Dorsolateral prefrontal cortex (tissue), 120 donors: ENCODE measurements at regions of chr6 and their contacts with region 1.

Region 1: DNA sequence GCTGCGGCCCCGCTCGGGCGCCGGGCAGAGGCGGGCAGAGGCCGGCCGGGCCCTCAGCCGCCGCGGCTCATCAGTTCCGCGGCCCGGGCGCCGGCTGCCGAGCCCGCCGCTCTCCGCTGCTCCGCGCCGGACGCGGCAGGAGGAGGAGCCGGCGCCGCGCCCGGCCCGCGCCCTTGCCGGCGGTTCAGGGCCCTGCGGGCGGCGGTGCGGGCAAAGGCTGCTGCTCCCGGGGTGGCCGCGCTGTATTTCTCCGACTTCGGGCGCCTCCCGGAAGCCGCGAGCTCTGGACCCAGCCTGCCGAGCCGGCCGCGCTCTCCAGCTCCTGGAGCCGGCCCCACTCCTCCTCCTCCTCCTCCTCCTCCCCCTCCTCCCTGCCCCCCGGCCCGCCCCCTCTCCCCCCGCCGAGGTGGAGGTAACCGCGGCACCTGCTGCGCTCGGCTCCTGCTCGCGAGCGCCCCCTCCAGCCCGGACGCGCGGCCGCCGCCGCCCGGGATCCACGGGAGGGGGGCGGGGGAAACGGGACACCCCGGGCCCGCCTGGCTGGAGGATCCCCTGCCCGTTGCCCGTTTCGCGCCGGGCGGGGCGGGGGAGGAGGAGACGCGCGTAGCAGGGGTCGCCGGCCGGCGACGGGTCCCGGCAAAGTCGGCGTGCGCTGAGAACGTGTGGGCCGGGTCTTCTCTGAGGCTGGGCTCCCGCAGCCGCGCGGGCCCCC is at the start of gene SLC22A23:
- DNase-seq: peak in 9 of 10 donors; percentile 40 to 84 (median 67)
- H3K4me3 ChIP-seq: peak within 1 kb of the TSS; percentile 72 to 95 (median 87)
- H3K27ac ChIP-seq: peak within 1 kb of the TSS; percentile 73 to 99 (median 97)
- H3K27me3 ChIP-seq: no peaks in the 10 kb centered on the region
- CTCF ChIP-seq: peak; percentile 48 to 94 (median 71)
- total RNA-seq, gene SLC22A23: 36.4 to 160 (median 55.7) TPM

Region 2: GRCh38 chr6:3281631-3282475 is 175.1 kb before region 1 on chr6:
- intact Hi-C with region 1: loop called (anchors 2 to 5 kb)
- DNase-seq: peak in 6 of 10 donors; percentile 29 to 55 (median 38)
- H3K4me3 ChIP-seq: no peak overlapping the region
- H3K27ac ChIP-seq: peak overlapping the region in 58 of 59 donors; percentile 18 to 85 (median 66)
- H3K27me3 ChIP-seq: no peaks in the 10 kb centered on the region
- CTCF ChIP-seq: no peak

Region 3: GRCh38 chr6:3356056-3356761 is 100.7 kb before region 1 on chr6:
- intact Hi-C with region 1: loop called (anchors 1 to 10 kb)
- DNase-seq: peak in 8 of 10 donors; percentile 29 to 66 (median 62)
- H3K4me3 ChIP-seq: peak overlapping the region in 56 of 59 donors; percentile 3 to 61 (median 42)
- H3K27ac ChIP-seq: peak overlapping the region; percentile 72 to 99 (median 95)
- H3K27me3 ChIP-seq: no peaks in the 10 kb centered on the region
- CTCF ChIP-seq: no peak

Region 4: DNA sequence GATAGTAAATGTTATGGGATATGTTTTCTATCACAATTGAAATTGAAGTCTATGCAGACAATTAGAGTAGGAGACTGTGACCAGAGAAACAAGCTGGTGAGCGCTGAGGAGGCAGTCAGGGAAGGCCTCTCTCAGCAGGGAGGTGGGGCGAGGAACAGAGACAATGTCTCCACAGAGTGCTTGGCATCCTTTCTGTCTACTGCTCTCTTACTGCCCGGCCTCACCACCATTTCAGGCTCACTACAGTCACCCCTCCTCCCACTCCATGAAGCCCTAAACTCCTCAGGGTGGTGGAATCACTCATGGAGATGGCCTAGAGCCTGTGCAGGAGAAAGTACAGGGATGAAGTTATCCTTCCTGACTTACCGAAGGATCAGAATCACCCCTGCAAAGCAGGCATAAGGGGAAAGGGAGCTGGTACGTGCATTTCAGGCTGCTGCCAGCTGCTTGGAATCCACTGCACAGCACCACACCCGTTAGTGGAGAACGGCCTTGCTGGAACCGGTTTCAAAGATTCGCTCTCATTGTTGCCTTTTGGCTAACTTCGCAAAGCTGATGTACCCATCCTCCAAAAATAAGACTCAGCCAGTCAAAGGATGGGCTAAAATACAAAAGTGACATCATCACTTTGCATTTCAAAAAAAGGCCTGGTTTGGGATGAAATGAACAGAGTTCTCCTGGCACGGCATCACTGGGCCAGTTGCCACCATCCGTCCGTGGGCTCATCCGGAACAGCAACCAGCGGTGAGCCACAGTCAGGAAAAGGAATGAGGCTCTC is 67.3 kb before region 1 on chr6:
- intact Hi-C with region 1: loop called (anchors 2 to 5 kb)
- DNase-seq: peak in 3 of 10 donors; percentile 47 to 65 (median 48)
- H3K4me3 ChIP-seq: peak overlapping the region in 10 of 59 donors; percentile 2 to 39 (median 16)
- H3K27ac ChIP-seq: peak overlapping the region; percentile 40 to 99 (median 97)
- H3K27me3 ChIP-seq: no peaks in the 10 kb centered on the region
- CTCF ChIP-seq: peak in 1 of 56 donors; percentile 3

Region 5: DNA sequence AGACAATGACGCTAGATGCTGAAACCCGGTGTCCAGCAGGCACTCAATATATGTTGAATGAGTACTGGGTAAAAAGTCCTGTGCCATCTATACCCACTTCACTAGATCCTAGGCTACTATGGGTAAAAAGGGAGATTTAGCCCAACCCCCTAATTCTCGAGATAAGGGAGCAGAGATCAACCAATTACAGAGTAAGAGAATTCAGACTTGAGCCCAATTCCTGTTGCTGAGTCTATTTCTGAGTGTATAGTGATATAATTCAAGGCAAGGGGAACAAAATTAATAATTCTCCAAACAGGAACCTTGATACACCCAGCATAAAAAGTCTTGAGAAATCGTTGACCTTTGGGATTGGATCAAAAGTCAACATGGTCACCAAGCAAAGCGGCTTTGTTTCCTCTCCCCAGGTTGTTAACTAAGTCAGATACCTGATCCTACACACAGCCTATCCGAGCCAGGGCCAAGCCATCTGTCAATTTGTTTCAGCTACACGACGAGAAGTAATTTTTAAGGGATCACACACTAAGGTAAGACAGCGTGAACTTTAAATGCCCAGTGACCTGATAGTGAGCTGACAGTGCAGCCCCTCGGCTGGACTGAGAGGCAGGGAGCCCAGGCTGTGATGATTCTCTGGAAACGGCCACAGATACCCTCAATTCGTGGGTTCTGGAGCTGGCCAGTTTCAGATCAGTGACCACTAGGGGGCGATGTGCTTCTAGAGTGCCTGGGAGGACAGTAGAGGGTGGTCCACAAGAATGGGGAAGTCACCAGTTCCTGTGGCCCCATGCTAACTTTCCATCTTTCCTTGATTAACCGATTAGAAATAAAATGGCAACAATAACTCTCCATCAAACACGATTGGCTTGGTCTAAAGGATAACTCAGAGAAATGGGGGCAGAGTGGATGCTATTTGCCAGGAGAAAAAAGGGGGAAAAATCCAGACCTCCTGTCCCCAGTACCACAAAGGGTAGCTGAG is 46.2 kb before region 1 on chr6:
- intact Hi-C with region 1: loop called in 1 of 2 experiments (anchors 5 kb)
- DNase-seq: peak in 5 of 10 donors; percentile 44 to 71 (median 64)
- H3K4me3 ChIP-seq: no peak overlapping the region
- H3K27ac ChIP-seq: peak overlapping the region in 27 of 59 donors; percentile 5 to 75 (median 45)
- H3K27me3 ChIP-seq: no peaks in the 10 kb centered on the region
- CTCF ChIP-seq: peak; percentile 35 to 85 (median 76)

Region 6: DNA sequence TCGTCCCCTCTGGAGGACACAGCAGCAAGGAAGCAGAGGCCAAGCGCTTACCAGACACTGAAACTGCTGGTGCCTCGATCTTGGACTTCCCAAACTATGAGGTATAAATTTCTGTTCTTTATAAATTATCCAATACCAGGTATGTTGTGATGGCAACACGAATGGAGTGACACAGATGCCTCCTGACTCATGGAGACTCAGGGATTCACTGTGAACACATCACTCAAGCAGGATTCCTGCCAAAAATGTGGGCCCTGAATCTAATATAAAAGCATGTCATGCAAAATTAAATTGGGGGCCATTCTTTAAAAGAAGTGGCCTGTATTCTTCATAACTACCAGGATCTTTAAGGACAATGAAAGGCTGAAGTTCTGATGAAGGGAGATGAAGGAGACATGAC is 52.4 kb after region 1 on chr6:
- intact Hi-C with region 1: loop called in 1 of 2 experiments (anchors 5 kb)
- DNase-seq: no peak
- H3K4me3 ChIP-seq: no peak overlapping the region
- H3K27ac ChIP-seq: no peak overlapping the region
- H3K27me3 ChIP-seq: no peaks in the 10 kb centered on the region
- CTCF ChIP-seq: no peak

Region 7: DNA sequence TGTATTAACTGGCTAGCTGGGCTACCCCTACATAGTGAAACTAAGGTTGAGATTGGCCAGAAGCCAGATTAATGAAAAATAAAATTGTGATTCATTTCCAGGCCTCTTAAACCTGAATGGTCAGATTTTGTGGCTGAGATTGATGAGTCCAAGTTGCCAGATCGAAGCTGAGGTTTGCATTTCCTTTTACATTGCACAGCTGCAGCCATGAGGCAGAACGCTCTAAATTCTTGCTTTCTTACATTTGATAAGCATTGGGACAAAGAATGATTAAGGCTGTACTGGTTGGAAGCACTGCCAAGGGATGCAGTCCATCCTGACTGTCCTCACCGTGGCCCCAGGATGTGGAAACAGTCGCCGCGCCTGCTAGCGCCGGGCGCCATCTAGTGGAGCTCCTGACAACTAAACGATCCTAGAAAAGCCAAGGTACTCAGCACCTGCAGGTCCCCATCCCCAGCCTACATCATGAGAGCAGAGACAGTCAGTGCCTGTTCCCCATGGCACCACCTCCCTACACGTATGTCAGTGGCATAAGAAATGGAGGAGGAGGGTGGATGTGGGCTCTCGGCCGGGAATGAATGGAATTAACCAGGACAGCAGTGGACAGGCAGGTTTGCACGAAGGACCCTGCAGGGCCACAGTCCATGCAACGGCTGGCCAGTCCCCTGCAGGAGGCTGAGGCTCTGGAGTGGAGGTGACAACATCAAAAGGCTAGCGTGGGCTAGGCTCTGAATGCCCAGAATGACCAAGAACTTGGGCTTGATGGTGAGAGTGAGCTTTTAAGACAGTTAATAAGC is 275.6 kb after region 1 on chr6:
- intact Hi-C with region 1: loop called in 1 of 2 experiments (anchors 2 kb)
- DNase-seq: peak; percentile 69 to 87 (median 85)
- H3K4me3 ChIP-seq: peak overlapping the region in 6 of 59 donors; percentile 7 to 40 (median 10)
- H3K27ac ChIP-seq: peak overlapping the region in 6 of 59 donors; percentile 7 to 25 (median 10)
- H3K27me3 ChIP-seq: no peaks in the 10 kb centered on the region
- CTCF ChIP-seq: peak; percentile 64 to 98 (median 92)

Region 8: DNA sequence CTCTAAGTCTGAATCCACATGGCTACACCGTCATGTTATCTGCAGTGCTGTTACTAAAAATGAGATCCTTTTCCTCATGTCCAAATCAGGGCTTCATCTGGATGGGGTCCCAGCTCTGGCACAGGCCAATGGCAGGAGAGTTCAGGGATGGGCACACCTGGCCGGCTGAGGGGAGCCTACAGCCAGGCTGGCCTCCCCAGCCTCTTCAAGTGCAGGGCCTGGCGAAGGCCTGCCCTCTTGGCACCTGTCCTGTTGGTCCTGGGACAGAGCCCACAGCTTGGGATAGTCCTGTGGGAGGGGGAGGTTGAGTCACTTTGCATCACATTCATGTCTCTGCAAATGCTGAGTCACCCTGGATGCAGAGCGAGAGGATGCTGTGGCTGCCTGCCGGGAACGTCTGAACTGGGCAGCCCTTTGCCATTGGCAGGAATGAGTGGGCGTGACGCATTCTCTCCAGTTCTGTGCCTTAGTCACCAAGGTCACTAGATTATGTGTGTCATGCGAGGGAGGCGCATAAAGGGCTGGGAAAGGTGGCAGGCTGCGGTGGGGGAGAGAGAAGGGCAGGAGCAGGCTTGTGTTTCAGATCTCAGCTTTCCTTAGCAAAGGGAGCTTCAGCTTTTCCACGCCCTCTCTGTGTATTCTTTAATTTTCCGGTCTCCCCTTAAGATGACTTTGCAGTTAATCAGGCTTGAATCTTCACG is 901.7 kb after region 1 on chr6:
- intact Hi-C with region 1: no loop called
- DNase-seq: peak; percentile 54 to 93 (median 80)
- H3K4me3 ChIP-seq: peak overlapping the region in 11 of 59 donors; percentile 3 to 34 (median 19)
- H3K27ac ChIP-seq: peak overlapping the region in 53 of 59 donors; percentile 2 to 86 (median 61)
- H3K27me3 ChIP-seq: no peaks in the 10 kb centered on the region
- CTCF ChIP-seq: peak in 3 of 56 donors; percentile 10 to 24 (median 12)